ENCODE measurements at regions of chr18 and their contacts with region 1.

Region 1: DNA sequence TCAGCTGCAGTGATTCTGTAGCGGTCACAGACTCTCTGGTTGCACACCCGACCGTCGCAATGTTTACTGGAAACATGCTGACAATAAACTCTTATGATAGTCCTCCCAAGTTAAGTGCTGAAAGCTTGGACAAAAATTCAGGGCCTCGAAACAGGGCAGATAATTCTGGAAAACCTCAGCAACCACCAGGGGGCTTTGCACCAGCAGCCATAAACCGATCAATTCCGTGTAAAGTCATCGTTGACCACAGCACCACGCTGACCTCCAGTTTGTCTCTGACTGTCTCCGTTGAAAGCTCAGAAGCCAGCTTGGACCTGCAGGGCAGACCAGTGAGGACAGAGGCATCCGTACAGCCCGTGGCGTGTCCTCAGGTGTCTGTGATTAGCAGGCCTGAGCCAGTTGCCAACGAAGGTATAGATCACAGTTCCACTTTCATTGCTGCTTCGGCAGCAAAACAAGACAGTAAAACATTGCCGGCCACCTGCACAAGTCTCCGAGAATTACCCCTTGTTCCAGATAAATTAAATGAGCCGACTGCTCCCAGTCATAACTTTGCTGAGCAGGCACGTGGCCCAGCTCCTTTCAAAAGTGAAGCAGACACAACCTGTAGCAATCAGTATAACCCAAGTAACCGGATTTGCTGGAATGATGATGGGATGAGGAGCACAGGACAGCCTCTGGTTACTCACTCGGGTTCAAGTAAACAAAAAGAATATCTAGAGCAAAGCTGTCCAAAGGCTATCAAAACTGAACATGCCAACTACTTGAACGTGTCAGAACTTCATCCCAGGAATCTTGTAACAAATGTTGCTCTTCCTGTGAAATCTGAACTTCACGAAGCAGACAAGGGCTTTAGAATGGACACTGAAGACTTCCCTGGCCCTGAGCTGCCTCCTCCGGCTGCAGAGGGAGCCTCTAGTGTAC is 166.3 kb downstream of the ASXL3 start:
- DNase-seq: no peak

Region 2: GRCh38 chr18:33577685-33578517 is 166.4 kb before region 1 on chr18 and contains the start of gene ASXL3:
- intact Hi-C with region 1: loop called (anchors 10 kb)
- DNase-seq: peak in 41 of 42 donors; percentile 23 to 83 (median 60)

Region 3: DNA sequence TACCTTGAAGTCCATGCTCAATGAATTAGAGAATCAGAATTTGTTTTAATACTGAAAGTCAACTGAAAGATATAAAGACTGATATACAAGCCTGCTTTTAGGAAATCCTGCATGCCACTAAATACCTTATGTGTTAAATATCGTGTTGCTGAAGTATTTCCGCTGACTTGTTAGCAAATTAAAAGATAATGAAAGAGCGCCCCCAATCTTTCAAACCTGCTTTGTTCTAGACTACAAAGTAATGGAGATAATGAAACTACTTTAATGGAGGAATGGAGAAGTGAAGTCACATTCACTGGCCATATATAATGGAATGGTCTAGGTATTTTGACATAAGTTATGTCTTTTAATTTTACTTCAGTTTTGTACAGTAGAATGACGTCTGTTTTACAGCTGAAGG is 70.6 kb before region 1 on chr18:
- intact Hi-C with region 1: no loop called
- DNase-seq: no peak

Measured in head of caudate nucleus (tissue), 42 donors.